ENCODE measurements at regions of chr2 and their contacts with region 1.

Region 1: GRCh38 chr2:88159955-88160415 is 10.2 kb upstream of the THNSL2 start:
- DNase-seq: peak; percentile 62
- H3K4me3 Mint-ChIP-seq: no peak overlapping the region
- H3K27ac Mint-ChIP-seq: no peak overlapping the region
- H3K4me1 Mint-ChIP-seq: no peaks in the 10 kb centered on the region
- H3K27me3 Mint-ChIP-seq: no peaks in the 10 kb centered on the region

Region 2: GRCh38 chr2:88170472-88170892 is 10.5 kb after region 1 on chr2:
- CTCF ChIA-PET with region 1: interaction called, 14 read pairs
- DNase-seq: no peak
- H3K4me3 Mint-ChIP-seq: peak overlapping the region; percentile 57
- H3K27ac Mint-ChIP-seq: no peak overlapping the region
- H3K4me1 Mint-ChIP-seq: peaks cover 7% of the 10 kb centered on the region
- H3K27me3 Mint-ChIP-seq: peaks cover 51% of the 10 kb centered on the region

Region 3: GRCh38 chr2:88321449-88322248 is 161.7 kb after region 1 on chr2:
- CTCF ChIA-PET with region 1: no interaction called
- DNase-seq: no peak
- H3K4me3 Mint-ChIP-seq: no peak overlapping the region
- H3K27ac Mint-ChIP-seq: no peak overlapping the region
- H3K4me1 Mint-ChIP-seq: no peaks in the 10 kb centered on the region
- H3K27me3 Mint-ChIP-seq: peaks cover 7% of the 10 kb centered on the region